GM12878 (cell line): ENCODE measurements at regions of chr2 and their contacts with region 1.

Region 1: DNA sequence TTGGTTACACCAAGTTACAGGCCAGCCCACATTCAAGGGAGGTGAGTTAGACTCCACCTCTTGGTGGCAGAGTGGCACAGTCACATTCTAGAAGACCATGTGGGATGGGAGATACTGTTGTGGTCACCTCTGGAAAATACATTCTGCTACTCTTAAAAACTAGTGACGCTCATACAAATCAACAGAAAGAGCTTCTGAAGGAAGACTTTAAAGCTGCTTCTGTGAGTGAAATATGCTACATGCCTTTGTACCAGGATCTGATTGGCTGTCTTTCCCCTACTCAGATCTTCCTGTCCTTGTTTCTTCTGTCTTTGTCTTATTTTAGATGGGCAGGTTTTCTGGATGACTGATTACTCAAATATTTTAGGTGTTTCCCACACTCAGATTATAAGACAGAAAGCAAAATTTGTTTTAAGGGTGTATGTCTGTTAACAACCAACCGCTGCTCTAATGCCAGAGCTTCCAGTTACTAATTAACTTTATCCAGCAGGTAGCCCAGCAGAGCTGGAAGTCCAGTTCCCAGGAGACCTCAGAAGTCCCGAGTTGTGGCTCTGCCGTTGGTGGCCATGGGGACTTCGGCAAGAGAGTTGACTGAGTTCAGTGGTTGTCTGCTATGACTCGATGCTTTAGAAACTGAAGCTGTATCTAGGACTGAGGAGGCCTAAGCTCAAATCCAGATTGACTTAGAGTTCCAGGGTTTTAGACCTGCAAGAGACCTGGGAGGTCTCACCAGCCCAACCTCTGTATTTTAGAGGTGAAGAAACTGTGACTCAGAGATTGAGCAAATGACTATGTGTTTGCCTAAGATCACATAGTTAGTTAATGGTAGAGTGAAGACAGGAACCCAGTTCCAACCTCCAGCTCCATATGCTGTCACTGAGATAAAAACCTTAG is 7.4 kb downstream of the IL1R2 start:
- DNase-seq: no peak
- ATAC-seq: peak; percentile 71
- H3K4me3 ChIP-seq: no peak overlapping the region
- H3K27ac ChIP-seq: peak overlapping the region; percentile 50; the same call in 1 of the 2 replicates
- H3K4me1 ChIP-seq: peaks cover 6% of the 10 kb centered on the region
- H3K27me3 ChIP-seq: no peaks in the 10 kb centered on the region; a peak in 2 of 4 replicates
- CTCF ChIP-seq: no peak; a peak in 1 of 6 replicates
- EP300 ChIP-seq: 0 out of 4 replicates have a peak, but pooled peaks of 1 of the 2 experiments have one; percentile 13
- POLR2A ChIP-seq: no peak
- RAD21 ChIP-seq: no peak

Region 2: DNA sequence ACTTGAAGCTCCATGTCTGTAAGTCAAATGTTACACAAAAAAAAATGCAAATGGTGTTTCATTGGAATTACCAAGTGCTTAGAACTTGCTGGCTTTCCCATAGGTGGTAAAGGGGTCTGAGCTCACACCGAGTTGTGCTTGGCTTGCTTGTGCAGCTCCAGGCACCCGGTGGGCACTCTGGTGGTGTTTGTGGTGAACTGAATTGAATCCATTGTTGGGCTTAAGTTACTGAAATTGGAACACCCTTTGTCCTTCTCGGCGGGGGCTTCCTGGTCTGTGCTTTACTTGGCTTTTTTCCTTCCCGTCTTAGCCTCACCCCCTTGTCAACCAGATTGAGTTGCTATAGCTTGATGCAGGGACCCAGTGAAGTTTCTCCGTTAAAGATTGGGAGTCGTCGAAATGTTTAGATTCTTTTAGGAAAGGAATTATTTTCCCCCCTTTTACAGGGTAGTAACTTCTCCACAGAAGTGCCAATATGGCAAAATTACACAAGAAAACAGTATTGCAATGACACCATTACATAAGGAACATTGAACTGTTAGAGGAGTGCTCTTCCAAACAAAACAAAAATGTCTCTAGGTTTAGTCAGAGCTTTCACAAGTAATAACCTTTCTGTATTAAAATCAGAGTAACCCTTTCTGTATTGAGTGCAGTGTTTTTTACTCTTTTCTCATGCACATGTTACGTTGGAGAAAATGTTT is 105.3 kb before region 1 on chr2:
- CTCF ChIA-PET with region 1: interaction called, 3 read pairs
- POLR2A ChIA-PET with region 1: interaction called, 3 read pairs
- RAD21 ChIA-PET with region 1: interaction called, 3 read pairs
- SMC1A ChIA-PET with region 1: interaction called, 18 read pairs
- in situ Hi-C with region 1: no loop called
- intact Hi-C with region 1: no loop called
- DNase-seq: no peak
- ATAC-seq: no peak
- H3K4me3 ChIP-seq: no peak overlapping the region
- H3K27ac ChIP-seq: no peak overlapping the region
- H3K4me1 ChIP-seq: no peaks in the 10 kb centered on the region
- H3K27me3 ChIP-seq: no peaks in the 10 kb centered on the region
- CTCF ChIP-seq: no peak
- EP300 ChIP-seq: no peak
- POLR2A ChIP-seq: no peak
- RAD21 ChIP-seq: no peak

Region 3: DNA sequence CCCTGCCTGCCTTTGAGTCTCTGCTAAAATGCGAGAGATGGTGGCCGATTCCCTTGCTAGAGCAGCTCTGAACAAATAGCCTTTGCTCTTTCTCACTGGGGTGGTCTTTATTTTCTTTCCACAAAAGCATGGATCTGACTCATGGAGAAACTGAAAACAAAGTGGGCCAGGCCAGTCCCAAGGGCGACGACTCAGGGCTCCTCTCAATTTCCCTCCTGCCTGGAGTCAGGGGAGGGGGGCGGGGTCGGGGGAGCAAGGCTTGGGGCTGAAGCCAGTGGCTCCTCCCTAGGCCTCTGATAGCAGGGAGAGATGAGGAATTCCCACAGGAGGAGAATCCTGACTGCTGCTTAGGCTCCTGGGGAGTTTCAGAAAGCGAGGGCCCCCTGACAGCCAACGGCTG is 24.5 kb before region 1 on chr2:
- CTCF ChIA-PET with region 1: no interaction called
- POLR2A ChIA-PET with region 1: no interaction called
- RAD21 ChIA-PET with region 1: interaction called, 12 read pairs
- SMC1A ChIA-PET with region 1: interaction called, 3 read pairs
- in situ Hi-C with region 1: no loop called
- intact Hi-C with region 1: no loop called
- DNase-seq: no peak
- ATAC-seq: no peak
- H3K4me3 ChIP-seq: no peak overlapping the region
- H3K27ac ChIP-seq: no peak overlapping the region
- H3K4me1 ChIP-seq: no peaks in the 10 kb centered on the region
- H3K27me3 ChIP-seq: no peaks in the 10 kb centered on the region
- CTCF ChIP-seq: no peak
- EP300 ChIP-seq: no peak
- POLR2A ChIP-seq: no peak
- RAD21 ChIP-seq: no peak

Region 4: GRCh38 chr2:102013206-102014040 is 14.3 kb after region 1 on chr2:
- CTCF ChIA-PET with region 1: interaction called, 20 read pairs
- POLR2A ChIA-PET with region 1: interaction called, 3 read pairs
- RAD21 ChIA-PET with region 1: interaction called, 3 read pairs
- SMC1A ChIA-PET with region 1: interaction called, 39 read pairs
- in situ Hi-C with region 1: no loop called
- intact Hi-C with region 1: no loop called
- DNase-seq: no peak
- ATAC-seq: peak; percentile 49
- H3K4me3 ChIP-seq: no peak overlapping the region
- H3K27ac ChIP-seq: no peak overlapping the region
- H3K4me1 ChIP-seq: peaks cover 3% of the 10 kb centered on the region; the same call in 1 of the 2 replicates
- H3K27me3 ChIP-seq: no peaks in the 10 kb centered on the region
- CTCF ChIP-seq: no peak
- EP300 ChIP-seq: no peak
- POLR2A ChIP-seq: no peak
- RAD21 ChIP-seq: no peak

Region 5: DNA sequence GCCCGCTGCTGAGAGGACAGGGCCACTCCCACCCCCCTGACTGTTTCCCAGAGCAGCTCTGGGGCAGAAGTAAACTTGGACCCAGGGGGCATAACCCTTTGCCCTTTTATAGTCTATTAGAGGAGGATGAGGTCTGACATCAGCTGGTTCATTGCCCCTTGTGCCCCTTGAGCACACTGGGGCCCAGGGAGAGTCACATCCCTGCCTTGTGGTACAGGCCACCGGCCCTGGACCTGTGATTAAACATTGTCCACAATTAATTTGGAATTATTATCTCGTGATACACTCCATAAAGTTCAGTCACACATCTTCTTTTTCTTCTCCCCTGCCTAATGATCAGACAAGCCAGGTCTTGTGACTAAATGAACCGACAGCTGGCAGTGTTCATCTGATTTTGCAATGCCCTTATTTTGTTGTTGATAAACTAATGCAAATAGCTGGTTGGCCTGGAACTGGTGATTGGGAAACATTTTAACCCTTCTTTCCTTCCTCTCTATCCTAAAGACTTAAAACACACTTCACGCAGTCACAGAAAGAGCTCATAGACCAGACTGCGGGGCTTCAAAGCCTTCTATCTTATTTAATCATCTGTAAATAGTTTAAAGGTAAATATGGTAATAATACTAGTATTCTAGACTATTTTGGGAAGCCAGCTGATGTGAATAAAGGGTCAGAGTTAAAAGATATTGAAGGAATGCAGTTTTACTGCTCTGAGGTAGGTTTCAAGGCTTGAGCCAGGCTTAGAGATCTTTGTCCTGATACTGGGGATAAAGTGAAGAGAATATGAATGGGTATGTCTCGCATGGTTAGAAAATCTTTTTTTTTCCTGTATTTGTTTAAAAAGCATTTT is 156.7 kb after region 1 on chr2:
- CTCF ChIA-PET with region 1: no interaction called
- POLR2A ChIA-PET with region 1: no interaction called
- RAD21 ChIA-PET with region 1: no interaction called
- SMC1A ChIA-PET with region 1: no interaction called
- in situ Hi-C with region 1: no loop called
- intact Hi-C with region 1: no loop called
- DNase-seq: no peak
- ATAC-seq: no peak
- H3K4me3 ChIP-seq: no peak overlapping the region
- H3K27ac ChIP-seq: no peak overlapping the region
- H3K4me1 ChIP-seq: no peaks in the 10 kb centered on the region
- H3K27me3 ChIP-seq: no peaks in the 10 kb centered on the region
- CTCF ChIP-seq: no peak
- EP300 ChIP-seq: no peak
- POLR2A ChIP-seq: no peak
- RAD21 ChIP-seq: no peak